CD4-positive, alpha-beta T cell (primary cell): ENCODE measurements at regions of chr4 and their contacts with region 1.

Region 1: DNA sequence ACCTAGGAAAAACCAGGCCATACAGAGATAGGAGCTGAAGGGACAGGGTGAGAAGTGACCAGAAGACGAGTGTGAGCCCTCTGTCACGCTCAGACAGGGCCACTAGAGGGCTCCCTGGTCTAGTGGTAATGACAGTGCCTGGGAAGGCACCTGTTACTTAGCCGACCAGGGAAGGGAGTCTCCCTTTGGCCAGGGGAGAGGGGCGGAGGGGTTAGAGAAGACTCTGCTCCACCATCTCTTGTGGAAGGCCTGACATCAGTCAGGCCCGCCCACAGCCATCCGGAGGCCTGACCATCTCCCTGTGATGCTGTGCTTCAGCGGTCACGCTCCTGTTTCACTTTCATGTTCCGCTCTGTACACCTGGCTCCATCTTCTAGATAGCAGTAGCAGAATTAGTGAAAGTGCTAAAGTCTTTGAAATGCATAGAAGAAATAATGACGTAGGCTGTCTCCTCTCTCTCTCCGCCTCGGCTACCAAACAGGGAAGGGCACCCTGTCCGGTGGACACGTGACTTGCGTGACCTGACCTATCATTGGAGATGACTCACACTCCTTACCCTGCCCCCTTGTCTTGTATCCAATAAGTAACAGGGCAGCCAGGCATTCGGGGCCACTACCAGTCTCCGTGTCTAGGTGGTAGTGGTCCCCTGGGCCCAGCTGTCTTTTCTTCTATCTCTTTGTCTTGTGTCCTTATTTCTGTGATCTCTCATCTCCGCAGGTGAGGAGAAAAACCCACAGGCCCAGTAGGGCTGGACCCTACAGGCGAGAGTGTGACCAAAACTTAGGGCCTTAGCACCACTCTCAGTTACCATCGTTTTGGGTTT is 26.7 kb downstream of the HTT-AS start:
- DNase-seq: peak; percentile 31 to 90 (median 55)
- ATAC-seq: peak; percentile 59
- H3K4me3 ChIP-seq: peak overlapping the region; percentile 57
- H3K4me3 Mint-ChIP-seq: peak overlapping the region; percentile 86
- H3K27ac ChIP-seq: peak overlapping the region in 1 of 2 donors; percentile 45
- H3K27ac Mint-ChIP-seq: peak overlapping the region; percentile 68
- H3K4me1 ChIP-seq: peaks cover 41% of the 10 kb centered on the region
- H3K4me1 Mint-ChIP-seq: peaks cover 35% of the 10 kb centered on the region
- H3K27me3 ChIP-seq: no peaks in the 10 kb centered on the region
- H3K27me3 Mint-ChIP-seq: no peaks in the 10 kb centered on the region
- CTCF ChIP-seq: peak; percentile 76

Region 2: GRCh38 chr4:3845094-3845749 is 797.5 kb after region 1 on chr4:
- CTCF ChIA-PET with region 1: no interaction called
- POLR2A ChIA-PET with region 1: no interaction called
- intact Hi-C with region 1: no loop called
- DNase-seq: no peak
- ATAC-seq: no peak
- H3K4me3 ChIP-seq: no peak overlapping the region
- H3K4me3 Mint-ChIP-seq: no peak overlapping the region
- H3K27ac ChIP-seq: no peak overlapping the region
- H3K27ac Mint-ChIP-seq: no peak overlapping the region
- H3K4me1 ChIP-seq: no peaks in the 10 kb centered on the region
- H3K4me1 Mint-ChIP-seq: no peaks in the 10 kb centered on the region
- H3K27me3 ChIP-seq: peaks cover 0 to 2% of the 10 kb centered on the region in 2 experiments
- H3K27me3 Mint-ChIP-seq: peaks cover 19% of the 10 kb centered on the region
- CTCF ChIP-seq: no peak

Region 3: GRCh38 chr4:3880615-3881120 is 833.0 kb after region 1 on chr4:
- CTCF ChIA-PET with region 1: no interaction called
- POLR2A ChIA-PET with region 1: no interaction called
- intact Hi-C with region 1: loop called in 1 of 2 experiments (anchors 5 kb)
- DNase-seq: peak; percentile 48 to 79 (median 60)
- ATAC-seq: peak; percentile 81
- H3K4me3 ChIP-seq: peak overlapping the region; percentile 34
- H3K4me3 Mint-ChIP-seq: peak overlapping the region; percentile 49
- H3K27ac ChIP-seq: no peak overlapping the region
- H3K27ac Mint-ChIP-seq: no peak overlapping the region
- H3K4me1 ChIP-seq: peaks cover 16% of the 10 kb centered on the region
- H3K4me1 Mint-ChIP-seq: peaks cover 19% of the 10 kb centered on the region
- H3K27me3 ChIP-seq: peaks cover 18 to 25% of the 10 kb centered on the region in 2 experiments
- H3K27me3 Mint-ChIP-seq: peaks cover 58% of the 10 kb centered on the region
- CTCF ChIP-seq: peak; percentile 52